Left lung (tissue), 14 donors: ENCODE measurements at regions of chr17 and their contacts with region 1.

Region 1: DNA sequence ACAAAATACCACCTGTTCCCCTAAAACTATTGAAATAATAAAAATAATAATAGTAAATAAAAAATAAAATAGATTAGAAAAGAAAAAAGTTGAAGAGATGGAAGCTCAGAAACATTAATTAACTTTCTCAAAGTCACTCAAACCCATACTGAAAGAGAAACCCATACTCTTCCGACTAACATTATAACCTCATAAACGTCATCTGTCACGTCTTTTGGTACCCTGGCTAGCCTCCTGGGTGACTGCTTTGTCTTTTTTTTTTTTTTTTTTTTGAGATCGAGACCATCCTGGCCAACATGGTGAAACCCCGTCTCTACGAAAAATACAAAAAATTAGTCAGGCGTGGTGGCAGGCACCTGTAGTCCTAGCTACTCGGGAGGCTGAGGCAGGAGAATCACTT is 7.6 kb downstream of the SLFN12L start:
- DNase-seq: no peak
- ATAC-seq: no peak
- H3K4me3 ChIP-seq: no peak overlapping the region
- H3K27ac ChIP-seq: no peak overlapping the region
- H3K4me1 ChIP-seq: peaks cover 0 to 7% of the 10 kb centered on the region in 2 donors
- H3K27me3 ChIP-seq: no peaks in the 10 kb centered on the region
- CTCF ChIP-seq: no peak

Region 2: GRCh38 chr17:35312790-35313711 is 216.8 kb before region 1 on chr17:
- intact Hi-C with region 1: loop called in 1 of 2 experiments (anchors 5 kb)
- DNase-seq: peak; percentile 51 to 88 (median 73)
- ATAC-seq: peak; percentile 95
- H3K4me3 ChIP-seq: peak overlapping the region; percentile 6 to 41
- H3K27ac ChIP-seq: peak overlapping the region in 1 of 2 donors; percentile 65
- H3K4me1 ChIP-seq: peaks cover 5 to 30% of the 10 kb centered on the region in 2 donors
- H3K27me3 ChIP-seq: peaks cover 0 to 12% of the 10 kb centered on the region in 2 donors
- CTCF ChIP-seq: peak; percentile 56 to 84

Region 3: DNA sequence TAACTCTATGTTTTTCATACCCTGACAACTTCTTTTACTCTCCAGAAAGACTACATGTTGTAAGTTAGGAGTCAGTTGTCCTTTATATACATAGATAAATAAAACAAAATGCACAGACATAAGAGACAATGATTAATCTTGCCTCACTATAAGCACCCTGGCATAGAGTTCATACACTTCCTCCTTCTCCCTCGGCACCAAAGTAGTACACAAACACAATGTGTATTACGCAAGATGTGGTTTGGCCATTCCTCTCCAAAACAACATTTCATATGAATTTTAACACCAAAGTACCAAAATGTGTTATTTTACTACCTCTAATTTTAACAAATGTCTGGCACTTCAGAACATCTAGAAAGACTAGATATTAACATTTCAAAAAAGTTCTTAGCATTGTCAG is 139.2 kb before region 1 on chr17:
- intact Hi-C with region 1: no loop called
- DNase-seq: no peak
- ATAC-seq: peak; percentile 35
- H3K4me3 ChIP-seq: no peak overlapping the region
- H3K27ac ChIP-seq: no peak overlapping the region
- H3K4me1 ChIP-seq: peaks cover 0 to 9% of the 10 kb centered on the region in 2 donors
- H3K27me3 ChIP-seq: no peaks in the 10 kb centered on the region
- CTCF ChIP-seq: no peak